ENCODE measurements at regions of chr17 and their contacts with region 1.

Region 1: DNA sequence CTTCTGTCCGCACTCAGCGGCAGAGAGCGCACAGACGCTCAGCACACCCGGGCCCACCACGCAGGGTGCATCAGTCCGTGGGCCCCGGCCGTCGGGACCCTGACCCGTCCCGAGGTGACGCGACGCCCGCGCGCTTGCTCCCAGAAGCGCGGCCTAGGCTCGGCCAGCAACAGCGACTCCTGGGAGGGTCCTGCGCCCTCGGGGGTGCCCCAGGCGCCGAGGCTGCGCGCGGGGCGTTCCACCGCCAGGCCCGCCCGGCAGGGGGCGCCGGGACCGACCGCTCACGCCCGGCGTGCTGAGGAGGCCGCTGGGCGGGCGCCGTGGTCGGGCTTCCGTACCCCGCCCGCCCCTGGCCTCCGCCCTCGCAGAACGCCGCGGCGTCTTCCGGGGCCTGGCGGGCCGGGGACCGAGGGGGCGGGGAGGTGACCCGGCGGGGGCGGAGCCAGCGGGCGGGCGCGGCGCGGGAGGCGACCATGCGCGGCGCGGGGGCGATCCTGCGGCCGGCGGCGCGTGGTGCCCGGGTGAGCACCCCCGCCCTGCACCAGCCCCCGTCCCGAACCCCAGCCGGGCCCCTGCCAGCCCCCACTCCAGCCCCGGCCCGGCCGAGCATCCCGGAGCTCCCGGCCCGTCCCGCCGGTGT is at the start of gene CISD3:
- DNase-seq: peak; percentile 94
- total RNA-seq, gene CISD3: 67.1 TPM

Region 2: DNA sequence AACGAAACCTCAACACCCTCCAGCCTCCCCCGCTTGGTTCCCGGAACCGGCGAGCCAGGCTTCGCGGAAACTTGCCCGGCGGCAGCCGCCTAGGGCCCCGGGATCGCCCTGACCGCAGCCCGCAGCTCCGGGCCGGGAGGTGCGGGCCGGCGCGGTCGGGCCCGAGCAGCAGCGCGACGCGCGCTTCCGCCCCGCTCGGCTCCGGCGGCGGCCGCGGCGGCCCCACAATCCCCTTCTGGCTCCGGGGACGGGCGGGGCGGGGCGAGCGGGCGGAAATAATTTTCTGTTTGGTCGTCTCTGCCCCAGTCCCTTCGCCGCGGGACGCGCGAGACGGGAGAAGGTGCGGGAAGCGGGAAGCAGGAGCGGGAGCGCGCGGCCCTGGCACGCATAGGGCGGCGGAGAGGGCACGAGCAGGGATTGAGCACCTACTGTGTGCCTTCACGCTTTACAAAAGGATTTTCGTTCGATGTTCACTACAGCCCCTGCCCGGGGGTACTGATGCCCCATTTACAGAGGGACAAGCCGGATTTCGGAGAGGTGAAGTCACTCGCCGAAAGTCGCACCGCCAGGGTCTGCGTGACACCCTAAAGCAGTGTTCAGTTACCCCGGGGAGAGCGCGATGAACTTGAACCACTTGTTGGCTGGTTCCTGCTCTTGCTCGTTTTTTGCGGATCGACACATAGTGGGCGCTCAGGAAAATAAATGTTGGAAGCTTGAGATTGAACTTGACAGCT is 27.7 kb before region 1 on chr17:
- intact Hi-C with region 1: loop called (anchors 1 kb)
- DNase-seq: peak; percentile 94